Panc1 (cell line): ENCODE measurements at regions of chr10 and their contacts with region 1.

Region 1: DNA sequence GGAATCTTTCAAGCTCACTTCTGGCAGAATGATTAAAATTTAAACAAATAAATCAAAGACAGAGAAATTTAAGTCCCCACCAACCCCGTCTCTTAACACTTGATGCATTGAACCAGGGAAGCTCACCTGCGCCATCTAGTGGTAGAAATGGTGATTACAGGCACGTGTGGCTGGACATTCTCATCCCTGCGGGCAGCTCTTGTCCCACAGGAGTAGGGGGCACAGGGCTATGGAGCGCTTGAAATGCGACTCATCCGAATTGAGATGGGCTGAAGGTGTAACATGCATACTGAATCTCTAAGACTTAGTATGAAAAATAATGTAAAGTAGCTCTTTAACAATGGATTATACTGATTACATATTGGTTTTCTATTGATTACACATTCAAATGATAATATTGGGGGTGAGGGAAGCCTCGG is 24.8 kb upstream of the SLIT1 start:
- DNase-seq: peak; percentile 78
- ATAC-seq: peak; percentile 82
- H3K4me3 ChIP-seq: no peak overlapping the region
- H3K27ac ChIP-seq: no peak overlapping the region
- H3K4me1 ChIP-seq: no peaks in the 10 kb centered on the region
- H3K27me3 ChIP-seq: no peaks in the 10 kb centered on the region
- CTCF ChIP-seq: peak; percentile 99

Region 2: DNA sequence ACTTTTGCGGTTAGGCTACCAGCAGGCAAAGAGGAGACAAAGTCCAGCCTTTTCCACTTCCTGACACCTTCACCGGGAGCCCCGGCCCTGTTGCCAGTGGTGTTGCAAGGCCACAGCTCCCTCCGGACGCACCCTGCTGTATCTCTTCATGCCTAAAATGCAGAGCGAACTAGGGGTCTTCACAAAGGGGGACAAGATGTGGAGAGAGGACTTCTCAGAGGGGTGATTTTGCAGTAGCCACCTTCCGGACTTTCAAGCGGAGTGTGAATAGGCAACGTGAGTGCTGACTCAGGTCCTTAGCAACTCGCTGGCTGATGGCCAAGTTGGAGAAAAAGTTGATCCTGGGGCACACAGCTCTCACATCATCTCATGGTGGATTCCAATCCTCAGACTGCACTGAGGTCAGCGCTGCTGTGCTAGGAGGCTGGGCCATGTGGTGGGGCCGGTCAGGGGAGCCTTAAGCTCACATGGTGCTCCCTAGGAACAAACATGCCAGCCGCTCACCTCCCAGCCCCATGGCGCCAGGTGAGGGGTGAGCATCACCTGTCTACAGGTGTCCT is 212.1 kb before region 1 on chr10:
- CTCF ChIA-PET with region 1: no interaction called
- POLR2A ChIA-PET with region 1: no interaction called
- in situ Hi-C with region 1: no loop called
- intact Hi-C with region 1: no loop called
- DNase-seq: no peak
- ATAC-seq: no peak
- H3K4me3 ChIP-seq: no peak overlapping the region
- H3K27ac ChIP-seq: no peak overlapping the region
- H3K4me1 ChIP-seq: no peaks in the 10 kb centered on the region
- H3K27me3 ChIP-seq: no peaks in the 10 kb centered on the region
- CTCF ChIP-seq: no peak

Region 3: DNA sequence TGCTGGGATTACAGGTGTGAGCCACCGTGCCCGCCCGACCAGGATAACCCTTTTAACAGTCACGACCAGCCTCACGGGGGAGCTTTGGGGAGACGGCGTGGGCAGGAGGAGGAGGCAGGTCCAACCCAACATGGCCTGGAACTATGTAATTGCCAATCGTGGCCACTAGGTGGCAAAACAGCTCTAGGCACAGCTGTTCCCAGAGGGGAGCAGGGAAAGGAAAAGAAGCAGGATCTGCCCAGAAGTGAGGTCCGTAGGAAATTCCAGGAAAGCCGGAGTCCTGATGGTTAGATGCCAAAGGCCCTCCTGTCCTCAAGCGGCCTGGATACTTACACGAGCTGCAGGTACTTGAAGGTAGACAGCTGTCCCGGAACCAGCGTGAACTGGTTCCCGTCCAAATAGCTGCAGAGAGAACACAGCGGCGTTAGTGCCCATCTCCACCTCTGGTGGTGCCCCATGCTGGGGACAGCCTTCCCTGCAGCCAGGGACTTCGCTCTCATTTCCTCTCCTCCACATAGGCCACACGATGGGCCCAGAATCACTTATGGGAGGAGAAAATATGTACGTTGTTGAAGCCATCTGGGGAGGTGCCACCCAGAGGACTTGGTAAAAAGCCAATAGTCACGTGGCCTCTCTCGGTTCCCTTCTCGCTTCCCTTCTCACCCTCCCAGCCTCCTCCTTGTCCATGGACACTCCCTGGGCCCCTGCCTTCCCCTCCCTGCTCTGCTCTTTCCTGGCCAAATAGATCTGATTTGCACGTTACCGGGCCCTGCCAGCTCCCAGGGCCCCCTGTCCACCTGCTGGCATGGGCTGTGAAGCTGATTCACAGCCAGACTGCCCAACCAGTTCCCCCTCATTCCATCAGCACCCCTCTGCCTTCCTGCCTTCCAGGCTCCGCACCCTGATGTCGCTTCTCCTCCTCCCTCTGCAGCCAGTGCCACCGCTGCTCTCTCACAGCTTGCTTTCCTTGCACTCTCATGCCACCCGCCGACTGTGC is 172.9 kb before region 1 on chr10:
- CTCF ChIA-PET with region 1: interaction called, 22 read pairs
- POLR2A ChIA-PET with region 1: no interaction called
- in situ Hi-C with region 1: no loop called
- intact Hi-C with region 1: no loop called
- DNase-seq: peak; percentile 84
- ATAC-seq: peak; percentile 97
- H3K4me3 ChIP-seq: peak overlapping the region; percentile 26 to 53
- H3K27ac ChIP-seq: 0 out of 2 replicates have a peak overlapping the region, but pooled peaks have one; percentile 8
- H3K4me1 ChIP-seq: 0 out of 2 replicates have a peak, but pooled peaks cover 6% of the 10 kb centered on the region
- H3K27me3 ChIP-seq: no peaks in the 10 kb centered on the region
- CTCF ChIP-seq: peak; percentile 98

Region 4: DNA sequence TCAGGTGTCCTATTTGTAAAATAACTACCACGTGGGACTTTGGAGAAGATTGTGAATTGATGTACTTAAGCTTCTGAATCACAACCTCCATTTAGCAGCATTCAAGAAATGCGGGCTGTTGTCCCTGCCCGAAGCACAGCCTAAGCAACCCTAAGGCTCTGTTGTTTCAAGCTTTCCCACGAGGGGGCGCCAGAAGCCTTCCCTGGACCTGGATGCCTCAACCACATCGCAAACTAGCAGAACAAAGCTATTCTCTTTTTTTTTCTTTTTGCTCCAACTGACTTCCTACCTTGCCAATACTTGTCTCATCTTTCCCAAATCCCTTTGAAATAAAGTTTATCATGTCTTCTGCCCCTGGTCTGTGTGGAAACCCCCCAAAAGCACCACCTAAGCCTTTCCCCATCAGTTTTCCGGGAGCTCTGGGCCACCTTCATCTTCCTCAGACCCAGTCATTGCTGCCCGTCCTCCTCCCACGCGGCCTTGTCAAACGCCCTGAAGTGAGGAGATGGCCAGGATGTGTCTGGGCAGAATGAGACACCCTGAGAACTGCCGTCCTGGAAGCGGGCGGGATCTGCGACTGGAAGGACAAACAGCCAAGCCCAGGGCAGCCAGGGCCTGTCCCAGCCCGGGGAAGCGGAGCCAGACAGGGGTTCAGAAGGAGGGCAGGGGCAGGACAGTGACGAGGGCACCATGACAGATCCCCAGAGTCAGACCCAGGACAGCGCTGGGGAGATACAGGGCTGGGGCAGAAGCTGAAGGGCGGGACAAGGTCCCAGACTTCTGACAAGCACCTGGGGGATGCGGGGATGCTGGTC is 137.5 kb before region 1 on chr10:
- CTCF ChIA-PET with region 1: interaction called, 51 read pairs
- POLR2A ChIA-PET with region 1: interaction called, 5 read pairs
- in situ Hi-C with region 1: no loop called
- intact Hi-C with region 1: loop called (anchors 1 kb)
- DNase-seq: peak; percentile 75
- ATAC-seq: peak; percentile 87
- H3K4me3 ChIP-seq: no peak overlapping the region
- H3K27ac ChIP-seq: no peak overlapping the region
- H3K4me1 ChIP-seq: no peaks in the 10 kb centered on the region; the same call in 1 of the 2 replicates
- H3K27me3 ChIP-seq: no peaks in the 10 kb centered on the region
- CTCF ChIP-seq: peak; percentile 99

Region 5: DNA sequence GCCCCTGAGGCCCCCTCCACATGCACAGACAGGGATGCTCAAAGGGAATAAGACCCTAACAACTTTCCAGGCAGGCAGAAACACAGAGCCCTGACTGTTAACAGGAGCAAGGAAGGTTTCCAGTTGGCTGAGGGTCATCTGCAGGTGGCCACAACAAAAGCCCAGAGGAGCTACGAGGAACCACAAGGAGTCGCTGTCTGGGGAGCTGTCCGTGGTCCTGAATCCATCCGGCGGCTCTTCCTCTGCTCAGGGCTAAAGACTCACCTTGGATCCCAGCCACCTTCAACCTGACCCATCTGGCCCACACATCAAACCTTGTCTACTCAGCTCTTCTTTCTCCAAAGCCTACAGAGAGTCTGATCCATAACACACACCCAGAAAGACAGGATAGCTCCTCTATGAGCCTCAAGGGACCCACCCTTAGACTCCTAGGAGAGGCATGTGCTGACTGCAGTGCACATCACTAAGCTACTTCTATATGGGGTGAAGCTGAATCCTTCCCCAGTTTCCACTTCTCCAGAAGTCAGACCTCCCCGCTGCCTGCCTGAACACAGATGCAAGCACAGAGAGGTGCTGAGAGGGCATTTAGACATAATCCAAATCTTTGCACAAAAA is 128.8 kb before region 1 on chr10:
- CTCF ChIA-PET with region 1: interaction called, 5 read pairs
- POLR2A ChIA-PET with region 1: interaction called, 3 read pairs
- in situ Hi-C with region 1: no loop called
- intact Hi-C with region 1: loop called (anchors 2 kb)
- DNase-seq: peak; percentile 45
- ATAC-seq: peak; percentile 68; the same call in 1 of the 2 replicates
- H3K4me3 ChIP-seq: no peak overlapping the region
- H3K27ac ChIP-seq: no peak overlapping the region
- H3K4me1 ChIP-seq: no peaks in the 10 kb centered on the region
- H3K27me3 ChIP-seq: peaks cover 3% of the 10 kb centered on the region; the same call in 1 of the 2 replicates
- CTCF ChIP-seq: peak; percentile 82; the same call in 1 of the 2 replicates

Region 6: DNA sequence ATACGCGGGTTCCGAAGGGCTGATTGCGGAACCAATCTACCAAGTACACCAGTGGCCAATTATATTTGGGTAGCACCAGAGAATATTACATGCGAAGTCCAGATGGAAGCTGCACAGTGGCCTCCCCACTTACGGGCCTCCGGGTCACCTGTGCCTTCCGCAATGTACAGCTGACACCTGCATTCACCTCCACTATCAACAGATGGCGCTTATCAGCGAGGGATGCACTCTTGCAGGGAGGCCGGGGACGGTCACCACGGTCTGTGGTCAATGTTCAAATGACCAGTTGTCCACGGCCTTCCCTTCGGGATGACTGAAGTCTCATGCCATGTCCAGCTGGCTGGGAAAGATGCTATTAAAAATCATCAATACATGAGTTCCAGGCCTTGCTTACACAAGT is 72.4 kb before region 1 on chr10:
- CTCF ChIA-PET with region 1: interaction called, 5 read pairs
- POLR2A ChIA-PET with region 1: no interaction called
- in situ Hi-C with region 1: no loop called
- intact Hi-C with region 1: loop called (anchors 5 kb)
- DNase-seq: no peak
- ATAC-seq: peak; percentile 66
- H3K4me3 ChIP-seq: no peak overlapping the region
- H3K27ac ChIP-seq: no peak overlapping the region
- H3K4me1 ChIP-seq: no peaks in the 10 kb centered on the region
- H3K27me3 ChIP-seq: peaks cover 2% of the 10 kb centered on the region
- CTCF ChIP-seq: peak; percentile 80; the same call in 1 of the 2 replicates